Activated CD4-positive, alpha-beta memory T cell treated with anti-CD3 and anti-CD28 coated beads for 36 hours (primary cell): ENCODE measurements at regions of chr10 and their contacts with region 1.

Region 1: GRCh38 chr10:70146489-70147258 is at the start of gene TYSND1:
- DNase-seq: peak; percentile 96
- H3K4me3 Mint-ChIP-seq: peak within 1 kb of the TSS; percentile 89
- H3K27ac Mint-ChIP-seq: peak within 1 kb of the TSS; percentile 90
- H3K4me1 Mint-ChIP-seq: peaks cover 21% of the 10 kb centered on the region
- H3K27me3 Mint-ChIP-seq: no peaks in the 10 kb centered on the region
- total RNA-seq, gene TYSND1: 10.9 to 12.1 TPM

Region 2: DNA sequence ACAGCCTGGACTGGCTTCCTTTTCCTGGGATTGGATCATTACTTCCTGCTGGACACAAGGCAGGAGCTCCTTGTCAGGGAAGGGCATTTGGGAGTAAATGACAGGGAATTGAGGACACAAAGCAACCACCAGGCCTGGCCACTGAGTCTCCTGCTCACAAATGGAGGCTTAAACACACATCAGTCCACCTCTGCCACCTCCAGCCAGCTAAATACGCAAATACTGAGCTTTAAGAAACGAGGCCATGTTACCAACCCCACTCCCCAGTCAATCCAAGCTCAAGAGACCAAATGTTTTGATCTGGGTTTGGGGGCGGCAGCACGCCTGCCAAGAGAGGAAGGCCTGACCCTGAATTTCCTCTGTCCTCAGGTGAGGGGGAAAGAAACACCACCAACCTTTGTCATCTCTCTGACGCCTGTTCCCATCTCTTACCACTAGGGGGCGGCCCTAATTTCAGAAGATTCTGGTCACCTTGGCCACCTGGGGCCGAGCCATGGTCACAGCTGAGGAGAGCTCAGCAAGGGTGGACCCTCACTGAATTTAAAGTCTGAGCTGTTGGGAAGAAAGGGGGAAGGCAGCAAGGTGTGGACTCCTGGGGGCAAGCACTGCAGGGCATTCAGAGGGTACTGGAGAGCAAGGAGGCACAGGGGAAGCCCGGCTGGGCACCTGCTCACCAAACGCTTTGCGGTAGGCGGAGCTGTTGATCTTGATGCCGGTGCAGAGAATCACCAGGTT is 30.6 kb before region 1 on chr10:
- CTCF ChIA-PET with region 1: interaction called, 59 read pairs
- POLR2A ChIA-PET with region 1: interaction called, 3 read pairs
- intact Hi-C with region 1: no loop called
- DNase-seq: peak; percentile 69
- H3K4me3 Mint-ChIP-seq: no peak overlapping the region
- H3K27ac Mint-ChIP-seq: no peak overlapping the region
- H3K4me1 Mint-ChIP-seq: peaks cover 4% of the 10 kb centered on the region
- H3K27me3 Mint-ChIP-seq: no peaks in the 10 kb centered on the region

Region 3: GRCh38 chr10:70162892-70163201 is 16.2 kb after region 1 on chr10:
- CTCF ChIA-PET with region 1: interaction called, 55 read pairs
- POLR2A ChIA-PET with region 1: interaction called, 50 read pairs
- intact Hi-C with region 1: loop called (anchors 1 kb)
- DNase-seq: peak; percentile 82
- H3K4me3 Mint-ChIP-seq: peak overlapping the region; percentile 40
- H3K27ac Mint-ChIP-seq: peak overlapping the region; percentile 93
- H3K4me1 Mint-ChIP-seq: peaks cover 69% of the 10 kb centered on the region
- H3K27me3 Mint-ChIP-seq: no peaks in the 10 kb centered on the region

Region 4: GRCh38 chr10:70206762-70207161 is 60.1 kb after region 1 on chr10:
- CTCF ChIA-PET with region 1: interaction called, 3 read pairs
- POLR2A ChIA-PET with region 1: no interaction called
- intact Hi-C with region 1: loop called (anchors 5 kb)
- DNase-seq: no peak
- H3K4me3 Mint-ChIP-seq: no peak overlapping the region
- H3K27ac Mint-ChIP-seq: no peak overlapping the region
- H3K4me1 Mint-ChIP-seq: no peaks in the 10 kb centered on the region
- H3K27me3 Mint-ChIP-seq: no peaks in the 10 kb centered on the region

Region 5: GRCh38 chr10:70233109-70233938 is 86.7 kb after region 1 on chr10 and contains the start of gene PPA1:
- CTCF ChIA-PET with region 1: interaction called, 20 read pairs
- POLR2A ChIA-PET with region 1: interaction called, 29 read pairs
- intact Hi-C with region 1: loop called (anchors 1 kb)
- DNase-seq: peak; percentile 99
- H3K4me3 Mint-ChIP-seq: peak within 1 kb of the TSS; percentile 85
- H3K27ac Mint-ChIP-seq: peak within 1 kb of the TSS; percentile 97
- H3K4me1 Mint-ChIP-seq: peaks cover 30% of the 10 kb centered on the region
- H3K27me3 Mint-ChIP-seq: peaks cover 2% of the 10 kb centered on the region
- total RNA-seq, gene PPA1: 359 to 368 TPM